ENCODE measurements at regions of chr12 and their contacts with region 1.

Region 1: GRCh38 chr12:34218165-34219045 is 196.1 kb downstream of the ALG10 start:
- DNase-seq: peak in 9 of 10 donors; percentile 44 to 89 (median 72)

Region 2: DNA sequence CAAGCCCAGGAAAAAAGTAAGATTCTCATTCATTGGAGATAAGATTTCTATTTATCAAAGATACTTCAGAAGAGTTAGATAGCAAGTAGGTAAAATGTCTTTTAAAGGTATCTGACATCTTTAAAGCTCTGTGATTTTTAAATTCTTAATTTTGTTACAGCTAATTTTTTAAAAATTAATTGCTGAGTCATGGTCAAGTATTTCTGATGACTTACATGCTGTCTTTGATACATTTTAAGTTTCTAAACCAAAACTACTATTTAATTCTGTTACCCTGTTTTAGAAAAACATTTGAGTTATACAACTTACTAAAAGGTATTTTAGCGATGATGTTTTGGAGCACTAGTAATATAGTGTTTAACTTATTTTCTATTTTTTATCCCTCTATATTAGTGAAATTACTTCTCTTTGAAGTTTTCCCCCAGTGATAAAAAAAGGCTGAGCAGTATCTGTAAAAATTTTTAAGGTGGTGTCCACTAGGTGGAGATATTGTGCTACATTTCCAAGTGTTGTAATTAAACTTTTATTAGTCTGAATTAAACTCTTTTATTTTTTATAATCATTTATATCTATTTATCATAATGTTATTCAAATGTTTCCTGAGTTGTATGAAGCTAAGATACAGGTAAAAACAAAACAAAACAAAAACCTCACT is 184.7 kb before region 1 on chr12:
- intact Hi-C with region 1: loop called (anchors 10 kb)
- DNase-seq: no peak

Region 3: GRCh38 chr12:34121360-34121759 is 97.0 kb before region 1 on chr12:
- intact Hi-C with region 1: loop called (anchors 5 kb)
- DNase-seq: no peak

Region 4: GRCh38 chr12:34257093-34257492 is 38.7 kb after region 1 on chr12:
- intact Hi-C with region 1: no loop called
- DNase-seq: no peak

Measured in posterior cingulate gyrus (tissue), 11 donors.